ENCODE measurements at regions of chr7 and their contacts with region 1.

Region 1: DNA sequence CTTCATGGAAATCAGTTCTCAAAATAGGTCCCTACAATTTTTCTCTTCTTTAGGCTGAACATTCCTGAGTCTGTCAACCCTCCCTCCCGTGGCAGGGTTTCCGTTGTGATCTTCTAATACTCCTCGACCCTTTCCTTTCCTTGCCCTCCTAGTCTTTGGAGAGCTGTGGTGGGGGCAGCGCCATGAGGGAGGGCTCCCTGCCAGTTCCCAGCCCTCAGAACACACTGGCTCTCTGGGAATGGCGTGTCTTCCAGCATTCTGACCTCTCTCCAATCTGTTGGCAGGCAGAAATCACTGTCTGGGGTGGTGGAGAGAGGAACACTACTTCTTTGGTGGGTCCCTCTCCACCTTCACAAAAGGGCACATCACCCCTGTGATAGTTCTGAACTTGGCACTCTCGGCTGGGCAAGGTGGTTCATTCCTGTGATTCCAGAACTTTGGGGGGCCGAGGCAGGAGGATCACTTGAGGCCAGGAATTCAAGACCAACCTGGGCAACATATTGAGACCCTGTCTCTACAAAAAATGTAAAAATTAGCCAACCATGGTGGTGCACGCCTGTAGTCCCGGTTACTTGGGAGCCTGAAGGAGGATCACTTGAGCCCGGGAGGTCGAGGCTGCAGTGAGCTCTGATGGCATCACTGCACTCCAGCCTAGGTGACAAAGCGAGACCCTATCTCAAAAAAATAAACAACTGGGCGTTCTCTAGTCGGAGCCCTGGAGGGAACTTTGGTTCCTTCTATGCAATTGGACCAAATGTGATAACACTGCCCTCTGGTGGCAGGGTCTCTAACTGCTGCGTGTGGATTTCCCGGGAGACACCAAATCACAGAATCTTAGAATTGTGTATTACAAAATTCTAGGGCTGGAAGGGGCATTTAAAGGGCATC is 13.1 kb upstream of the ARPC1A start:
- DNase-seq: peak; percentile 58
- H3K4me3 ChIP-seq: no peak overlapping the region
- H3K27ac ChIP-seq: no peak overlapping the region
- H3K4me1 ChIP-seq: peaks cover 7% of the 10 kb centered on the region
- H3K27me3 ChIP-seq: no peaks in the 10 kb centered on the region
- CTCF ChIP-seq: peak; percentile 94

Region 2: GRCh38 chr7:99040104-99040958 is 272.2 kb before region 1 on chr7:
- intact Hi-C with region 1: loop called (anchors 5 kb)
- DNase-seq: peak; percentile 76
- H3K4me3 ChIP-seq: no peak overlapping the region
- H3K27ac ChIP-seq: peak overlapping the region; percentile 77
- H3K4me1 ChIP-seq: peaks cover 26% of the 10 kb centered on the region
- H3K27me3 ChIP-seq: no peaks in the 10 kb centered on the region
- CTCF ChIP-seq: peak; percentile 83

Region 3: GRCh38 chr7:99374103-99375064 is 61.8 kb after region 1 on chr7 and contains the start of gene ARPC1B:
- intact Hi-C with region 1: no loop called
- DNase-seq: peak; percentile 88
- H3K4me3 ChIP-seq: peak within 1 kb of the TSS; percentile 93
- H3K27ac ChIP-seq: peak within 1 kb of the TSS; percentile 97
- H3K4me1 ChIP-seq: peaks cover 65% of the 10 kb centered on the region
- H3K27me3 ChIP-seq: no peaks in the 10 kb centered on the region
- CTCF ChIP-seq: no peak
- total RNA-seq, gene ARPC1B: 33.6 TPM